Endothelial cell of umbilical vein (primary cell): ENCODE measurements at regions of chr11 and their contacts with region 1.

Region 1: GRCh38 chr11:128745311-128746136 is 51.7 kb downstream of the FLI1 start:
- DNase-seq: peak; percentile 53
- H3K4me3 ChIP-seq: no peak overlapping the region
- H3K27ac ChIP-seq: no peak overlapping the region
- H3K4me1 ChIP-seq: peaks cover 9% of the 10 kb centered on the region
- H3K27me3 ChIP-seq: no peaks in the 10 kb centered on the region
- CTCF ChIP-seq: no peak
- POLR2A ChIP-seq: no peak

Region 2: DNA sequence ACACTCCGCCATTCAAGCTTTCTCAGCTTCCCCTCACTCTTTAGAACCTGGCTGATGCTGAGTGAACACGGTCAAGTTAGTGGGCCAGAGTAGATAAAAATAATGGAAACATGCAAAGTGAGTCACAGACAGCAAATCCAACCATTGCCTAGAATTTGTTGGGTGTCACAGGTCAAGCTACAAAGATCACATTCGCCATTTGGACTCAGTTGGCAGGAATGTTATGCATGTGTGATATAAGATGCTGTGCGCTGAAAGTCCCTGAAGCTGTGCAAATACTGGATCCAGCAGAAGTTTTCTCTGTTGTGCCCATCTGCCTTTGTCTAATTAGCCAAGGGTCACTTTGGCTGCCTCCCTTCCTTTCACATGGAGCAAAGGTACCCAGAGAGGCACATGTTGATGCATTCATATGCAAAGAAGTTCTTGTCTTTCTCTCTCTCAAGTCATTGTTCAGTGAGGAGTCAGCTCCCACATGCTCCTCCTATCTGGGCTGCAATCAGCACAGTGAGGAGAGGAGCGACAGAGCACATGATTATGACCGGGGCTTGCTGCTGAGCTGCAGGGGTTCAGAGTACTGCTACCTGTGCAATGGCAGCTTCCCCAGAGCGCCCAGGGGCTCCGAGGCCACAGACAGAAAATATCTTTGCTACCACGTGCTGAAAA is 12.0 kb before region 1 on chr11:
- CTCF ChIA-PET with region 1: interaction called, 6 read pairs
- POLR2A ChIA-PET with region 1: no interaction called
- dilution Hi-C with region 1: no loop called
- intact Hi-C with region 1: loop called (anchors 1 kb)
- DNase-seq: peak; percentile 37
- H3K4me3 ChIP-seq: no peak overlapping the region
- H3K27ac ChIP-seq: no peak overlapping the region
- H3K4me1 ChIP-seq: peaks cover 48% of the 10 kb centered on the region
- H3K27me3 ChIP-seq: no peaks in the 10 kb centered on the region
- CTCF ChIP-seq: no peak
- POLR2A ChIP-seq: no peak

Region 3: DNA sequence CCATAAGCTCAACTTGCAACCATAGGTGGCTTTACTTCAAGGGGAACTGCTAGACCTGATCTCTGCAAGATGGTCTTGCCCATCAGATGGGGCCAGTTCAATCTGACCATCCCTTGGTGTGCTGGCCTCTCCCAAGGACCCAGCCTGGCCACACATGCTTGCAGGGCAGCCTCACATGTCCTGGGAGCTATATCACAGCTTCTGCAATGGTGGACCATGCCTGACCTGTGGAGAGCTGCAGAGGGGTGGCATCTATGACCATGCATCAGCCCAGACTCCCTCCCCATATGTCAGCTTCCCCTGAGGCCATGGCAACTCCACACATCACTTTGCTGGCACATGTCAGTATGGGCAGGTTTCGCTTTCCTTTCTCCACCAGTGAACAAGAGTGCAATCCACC is 354.7 kb after region 1 on chr11:
- CTCF ChIA-PET with region 1: no interaction called
- POLR2A ChIA-PET with region 1: no interaction called
- dilution Hi-C with region 1: no loop called
- intact Hi-C with region 1: no loop called
- DNase-seq: no peak
- H3K4me3 ChIP-seq: no peak overlapping the region
- H3K27ac ChIP-seq: no peak overlapping the region
- H3K4me1 ChIP-seq: no peaks in the 10 kb centered on the region
- H3K27me3 ChIP-seq: no peaks in the 10 kb centered on the region
- CTCF ChIP-seq: no peak
- POLR2A ChIP-seq: no peak